Activated CD4-positive, alpha-beta T cell treated with anti-CD3 and anti-CD28 coated beads, Interleukin-2, amount 10 ng/mL, durations not matched to agents 24 days and 14 days (primary cell): ENCODE measurements at regions of chr14 and their contacts with region 1.

Region 1: GRCh38 chr14:30333934-30334333 is 225.0 kb upstream of the G2E3 start:
- DNase-seq: no peak
- H3K4me3 Mint-ChIP-seq: peak overlapping the region; percentile 9
- H3K27ac Mint-ChIP-seq: peak overlapping the region; percentile 74
- H3K4me1 Mint-ChIP-seq: peaks cover 16% of the 10 kb centered on the region
- H3K27me3 Mint-ChIP-seq: no peaks in the 10 kb centered on the region

Region 2: DNA sequence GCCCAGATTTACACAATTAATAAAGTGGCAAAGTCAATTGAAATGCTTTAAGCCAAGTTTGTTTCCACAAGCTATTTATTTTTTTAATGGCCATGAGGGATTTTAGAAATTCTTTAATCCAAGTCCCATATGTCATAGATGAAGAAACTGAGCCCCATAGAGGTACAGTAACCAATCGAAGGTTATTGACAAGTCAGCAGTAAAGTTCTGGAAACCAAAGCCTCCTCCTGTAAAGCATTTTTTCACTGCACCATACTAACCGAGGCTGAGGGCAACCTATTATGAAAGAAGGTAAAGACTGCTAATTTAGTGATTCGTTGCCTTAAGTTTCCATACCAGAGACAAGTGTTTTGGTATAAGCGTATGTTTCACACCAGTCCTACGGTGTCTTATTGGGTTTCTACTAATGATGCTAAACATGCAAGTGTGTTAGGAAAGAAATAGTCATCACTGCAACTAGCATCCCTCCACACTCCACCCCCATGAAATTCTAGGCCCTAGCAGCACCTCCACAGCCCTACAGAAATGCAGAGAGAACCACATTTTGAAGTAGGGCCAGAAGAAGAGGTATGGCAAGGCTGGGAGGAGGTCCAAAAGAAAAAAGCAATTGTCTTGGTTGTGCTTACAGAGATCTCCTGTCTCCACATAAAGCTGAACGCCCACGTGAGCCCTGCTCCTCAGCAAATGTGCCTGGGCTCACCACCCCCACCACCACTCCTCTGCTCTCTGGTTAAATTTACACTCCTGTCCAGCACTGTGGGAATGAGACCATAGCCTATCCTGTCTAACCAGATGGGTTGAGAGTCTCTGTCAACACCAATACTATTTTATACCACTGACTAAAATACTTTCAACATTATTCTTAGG is 46.1 kb before region 1 on chr14:
- intact Hi-C with region 1: loop called (anchors 5 kb)
- DNase-seq: no peak
- H3K4me3 Mint-ChIP-seq: no peak overlapping the region
- H3K27ac Mint-ChIP-seq: peak overlapping the region; percentile 60
- H3K4me1 Mint-ChIP-seq: no peaks in the 10 kb centered on the region
- H3K27me3 Mint-ChIP-seq: no peaks in the 10 kb centered on the region